Colonic mucosa (tissue), 4 donors: ENCODE measurements at regions of chr3 and their contacts with region 1.

Region 1: GRCh38 chr3:133805527-133806475 is at the start of gene SRPRB:
- DNase-seq: peak; percentile 97
- H3K4me3 ChIP-seq: peak within 1 kb of the TSS; percentile 84
- H3K27ac ChIP-seq: peak within 1 kb of the TSS; percentile 23
- H3K4me1 ChIP-seq: no peaks in the 10 kb centered on the region
- H3K27me3 ChIP-seq: no peaks in the 10 kb centered on the region
- CTCF ChIP-seq: no peak
- total RNA-seq, gene SRPRB: 38.0 to 86.1 TPM

Region 2: DNA sequence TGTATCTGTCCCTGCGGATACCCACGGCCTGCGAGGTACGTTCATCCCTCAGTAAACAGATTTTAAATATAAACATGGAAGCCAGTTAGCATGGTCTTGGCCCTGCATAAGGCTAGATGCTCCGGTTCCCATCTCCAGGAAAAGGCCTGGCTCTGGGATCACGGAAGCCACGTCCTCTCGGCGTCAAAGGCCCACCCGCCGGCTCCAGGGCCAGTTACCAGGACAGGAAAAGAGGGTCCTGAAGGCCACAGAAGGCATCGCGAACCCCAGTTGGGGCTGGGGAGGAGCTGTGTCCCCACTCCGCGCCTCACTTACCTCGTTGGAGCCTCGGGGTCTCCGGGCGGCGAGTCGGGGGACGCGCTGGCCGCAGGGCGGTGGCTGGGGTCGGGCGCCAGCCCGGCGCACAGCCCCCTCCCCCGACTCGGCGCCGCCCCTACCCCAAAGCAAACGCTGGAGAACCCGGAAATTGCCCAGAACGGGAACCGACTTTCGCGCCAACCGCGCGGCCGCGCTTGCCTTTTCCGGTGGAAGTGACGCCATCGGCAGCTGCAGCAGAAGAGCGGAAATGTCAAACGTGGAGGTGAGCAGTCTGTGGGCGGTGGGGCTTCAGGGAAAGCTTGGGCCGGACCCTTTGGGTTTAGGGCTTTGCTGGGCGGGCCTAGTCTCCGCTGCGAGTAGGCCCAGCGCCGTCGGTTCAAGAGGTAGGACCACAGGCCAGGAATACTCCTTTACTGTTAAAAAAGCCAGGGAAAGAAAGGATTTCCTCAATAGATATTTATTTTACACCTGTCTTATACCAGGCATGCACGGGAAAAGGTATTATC is 144.1 kb before region 1 on chr3 and contains the start of gene TOPBP1:
- intact Hi-C with region 1: loop called (anchors 10 kb)
- DNase-seq: peak; percentile 92
- H3K4me3 ChIP-seq: peak within 1 kb of the TSS; percentile 95
- H3K27ac ChIP-seq: peak within 1 kb of the TSS; percentile 76
- H3K4me1 ChIP-seq: peaks cover 5% of the 10 kb centered on the region
- H3K27me3 ChIP-seq: no peaks in the 10 kb centered on the region
- CTCF ChIP-seq: no peak
- total RNA-seq, gene TOPBP1: 21.7 to 34.6 TPM